Motor neuron (in vitro differentiated cells): ENCODE measurements at regions of chr10 and their contacts with region 1.

Region 1: DNA sequence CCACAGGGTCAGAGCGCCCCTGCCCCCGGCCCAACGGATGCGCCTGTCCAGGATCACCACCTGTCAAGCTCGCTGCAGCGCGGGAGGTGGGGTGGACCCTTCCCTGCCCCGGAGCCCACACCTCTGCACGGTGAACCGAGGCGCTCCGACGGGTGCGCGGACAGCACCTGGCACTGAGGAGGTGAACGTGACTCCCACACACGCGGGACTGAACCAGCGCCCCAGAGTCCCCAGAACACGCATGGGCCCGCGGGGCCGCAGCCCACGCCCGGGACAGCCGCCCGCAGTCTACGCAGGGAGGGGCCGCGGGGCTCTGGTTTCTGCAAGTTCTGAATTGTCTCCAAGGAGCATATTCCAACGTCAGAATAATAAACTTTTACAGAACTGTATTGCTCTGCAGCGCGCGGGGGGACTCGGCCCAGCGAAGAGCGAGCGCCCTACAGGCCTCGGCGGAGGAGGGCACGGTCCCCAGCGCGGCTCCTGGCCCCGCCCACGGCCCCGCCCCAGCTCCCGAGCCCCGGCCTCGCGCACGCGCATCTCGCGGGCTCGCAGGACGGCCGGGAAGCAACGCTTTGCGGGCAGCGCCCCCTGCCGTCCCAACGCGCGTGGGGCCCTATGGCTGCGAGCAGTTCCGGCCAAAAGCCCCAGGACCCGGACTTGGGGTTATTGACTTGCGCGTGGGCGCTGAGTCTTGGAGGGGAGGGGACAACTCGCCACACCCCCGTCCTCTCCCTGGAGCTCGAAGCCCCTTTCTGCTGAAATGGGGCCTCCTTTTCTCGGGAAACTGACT is 29.7 kb downstream of the OAT start:
- ATAC-seq: peak; percentile 89 to 96 (median 96)
- H3K4me3 ChIP-seq: peak overlapping the region; percentile 12 to 33 (median 22)
- H3K27ac ChIP-seq: no peak overlapping the region
- H3K4me1 ChIP-seq: peaks cover 3 to 12% of the 10 kb centered on the region in 2 donors

Region 2: DNA sequence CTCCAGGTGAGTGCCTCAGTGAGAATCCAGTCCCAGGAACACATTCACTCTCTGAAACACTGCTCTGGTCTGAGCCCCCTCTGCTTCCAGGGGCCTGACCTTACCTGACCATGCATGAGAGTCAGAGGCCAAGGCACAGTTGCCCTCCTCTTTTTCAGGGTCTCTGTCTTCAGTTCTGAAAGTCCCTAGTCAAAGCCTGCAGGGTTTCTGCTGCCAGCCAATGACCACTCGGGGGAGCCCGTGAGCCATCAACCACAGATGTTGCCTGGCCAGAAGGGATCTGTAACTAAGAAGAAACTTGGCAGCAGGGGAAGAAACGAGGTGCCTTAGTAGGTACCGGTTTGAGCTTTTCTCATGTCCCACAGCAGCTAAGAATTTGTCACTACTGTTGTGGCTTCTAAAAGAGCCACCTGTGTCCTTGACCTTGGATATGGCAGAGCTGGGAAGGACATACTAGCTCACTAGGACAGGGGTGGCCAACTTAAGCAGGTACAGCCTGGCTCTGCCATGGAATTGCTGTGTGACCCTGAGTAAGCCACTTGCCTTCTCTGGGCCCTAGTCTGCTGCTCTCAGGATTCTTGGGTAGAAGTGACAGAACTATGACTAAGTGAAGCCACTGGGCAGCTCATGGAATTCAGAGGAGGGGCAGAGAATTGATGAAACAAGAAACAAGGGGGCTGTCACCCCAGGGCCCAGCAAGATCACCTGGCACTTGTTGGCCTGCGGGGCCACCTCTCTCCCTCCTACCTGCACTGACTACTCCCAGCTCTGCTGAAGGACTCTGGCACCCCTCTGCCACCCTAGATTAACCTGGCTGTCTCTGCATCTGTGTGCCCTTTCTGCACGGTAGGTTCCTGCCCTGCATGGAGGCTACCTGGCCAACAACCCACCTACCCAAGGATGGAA is 806.7 kb before region 1 on chr10:
- in situ Hi-C with region 1: loop called in 5 of 9 experiments (anchors 25 kb)
- ATAC-seq: peak; percentile 57 to 85 (median 76)
- H3K4me3 ChIP-seq: no peak overlapping the region
- H3K27ac ChIP-seq: no peak overlapping the region
- H3K4me1 ChIP-seq: no peaks in the 10 kb centered on the region

Region 3: GRCh38 chr10:123842692-123843385 is 546.2 kb before region 1 on chr10:
- in situ Hi-C with region 1: no loop called
- ATAC-seq: peak in 1 of 8 experiments; percentile 27
- H3K4me3 ChIP-seq: no peak overlapping the region
- H3K27ac ChIP-seq: no peak overlapping the region
- H3K4me1 ChIP-seq: no peaks in the 10 kb centered on the region

Region 4: GRCh38 chr10:123994417-123995081 is 394.5 kb before region 1 on chr10:
- in situ Hi-C with region 1: loop called (anchors 5 to 25 kb)
- ATAC-seq: peak; percentile 57 to 94 (median 76)
- H3K4me3 ChIP-seq: peak overlapping the region in 3 of 5 donors; percentile 5 to 17 (median 6)
- H3K27ac ChIP-seq: no peak overlapping the region
- H3K4me1 ChIP-seq: peaks cover 0 to 14% of the 10 kb centered on the region in 2 donors

Region 5: GRCh38 chr10:124259139-124259825 is 129.7 kb before region 1 on chr10:
- in situ Hi-C with region 1: loop called in 1 of 9 experiments (anchors 25 kb)
- ATAC-seq: peak in 1 of 8 experiments; percentile 65
- H3K4me3 ChIP-seq: no peak overlapping the region
- H3K27ac ChIP-seq: no peak overlapping the region
- H3K4me1 ChIP-seq: peaks cover 0 to 16% of the 10 kb centered on the region in 2 donors

Region 6: GRCh38 chr10:124701435-124701834 is 312.4 kb after region 1 on chr10:
- in situ Hi-C with region 1: no loop called
- ATAC-seq: peak in 1 of 8 experiments; percentile 5
- H3K4me3 ChIP-seq: no peak overlapping the region
- H3K27ac ChIP-seq: no peak overlapping the region
- H3K4me1 ChIP-seq: peaks cover 9 to 28% of the 10 kb centered on the region in 2 donors

Region 7: GRCh38 chr10:125123476-125124114 is 734.6 kb after region 1 on chr10:
- in situ Hi-C with region 1: no loop called
- ATAC-seq: peak; percentile 17 to 79 (median 52)
- H3K4me3 ChIP-seq: no peak overlapping the region
- H3K27ac ChIP-seq: no peak overlapping the region
- H3K4me1 ChIP-seq: peaks cover 0 to 38% of the 10 kb centered on the region in 2 donors